Left cardiac atrium (tissue), 4 donors: ENCODE measurements at regions of chr2 and their contacts with region 1.

Region 1: GRCh38 chr2:105812180-105813044 is 67.7 kb downstream of the NCK2 start:
- DNase-seq: peak; percentile 56
- ATAC-seq: peak; percentile 91 to 93

Region 2: DNA sequence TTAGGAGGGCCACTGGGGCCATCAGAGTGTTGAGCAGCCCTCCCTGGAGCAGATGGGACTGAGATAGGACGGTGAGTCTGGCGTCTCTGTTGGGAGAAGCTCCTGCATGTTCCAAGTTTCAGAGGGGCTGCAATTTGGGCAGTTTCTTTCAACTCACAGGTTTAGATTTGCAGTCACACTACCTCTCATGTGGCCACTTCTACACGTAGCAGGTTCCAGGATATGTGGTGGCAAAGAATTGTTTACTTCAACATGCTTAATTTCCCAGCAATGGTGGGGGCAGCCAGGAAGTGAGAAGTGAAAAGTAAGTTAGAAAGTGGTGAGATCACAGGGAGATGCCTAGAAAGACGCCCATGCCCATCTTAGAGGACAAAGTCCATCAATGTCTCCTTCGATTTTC is 58.4 kb before region 1 on chr2:
- intact Hi-C with region 1: no loop called
- DNase-seq: no peak
- ATAC-seq: peak in 1 of 2 donors; percentile 19

Region 3: DNA sequence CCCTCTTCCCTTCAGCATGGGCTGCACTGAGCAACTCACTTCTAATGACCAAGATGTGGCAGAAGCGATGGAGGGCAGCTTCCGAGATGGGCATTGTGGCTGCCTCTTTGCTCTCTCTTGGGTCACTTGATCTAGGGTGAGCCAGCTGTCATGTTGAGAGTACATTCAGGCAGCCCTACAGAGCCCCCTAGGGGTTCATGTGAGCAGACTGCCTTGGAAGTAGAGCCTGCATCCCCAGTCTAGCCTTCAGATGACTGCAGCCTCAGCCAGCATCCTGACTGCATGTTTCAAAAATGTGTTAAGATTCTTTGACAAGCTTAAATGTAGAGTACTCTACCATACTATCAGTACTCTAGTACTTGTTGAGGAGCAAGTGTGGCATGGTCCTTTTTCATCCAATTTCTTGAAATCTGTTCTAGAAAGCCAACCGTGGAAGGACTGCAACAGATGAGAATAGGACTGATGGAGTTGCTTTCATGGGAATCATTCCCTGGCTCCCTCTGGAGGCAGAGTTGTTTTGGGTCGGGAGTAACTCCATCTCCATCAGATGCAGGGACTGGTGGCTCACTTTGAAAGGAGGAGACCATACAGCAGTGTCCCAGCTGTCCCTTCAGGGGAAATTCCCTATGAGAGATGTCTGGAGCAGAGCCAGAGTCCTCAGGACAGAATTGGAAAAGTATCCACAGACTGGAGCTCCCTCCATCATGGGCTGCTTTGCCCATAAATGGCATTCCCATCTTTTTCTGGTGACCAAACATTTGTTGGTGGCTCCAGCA is 76.4 kb after region 1 on chr2:
- intact Hi-C with region 1: loop called in 1 of 2 experiments (anchors 10 kb)
- DNase-seq: no peak
- ATAC-seq: no peak